Thyroid gland (tissue), 4 donors: ENCODE measurements at regions of chr12 and their contacts with region 1.

Region 1: DNA sequence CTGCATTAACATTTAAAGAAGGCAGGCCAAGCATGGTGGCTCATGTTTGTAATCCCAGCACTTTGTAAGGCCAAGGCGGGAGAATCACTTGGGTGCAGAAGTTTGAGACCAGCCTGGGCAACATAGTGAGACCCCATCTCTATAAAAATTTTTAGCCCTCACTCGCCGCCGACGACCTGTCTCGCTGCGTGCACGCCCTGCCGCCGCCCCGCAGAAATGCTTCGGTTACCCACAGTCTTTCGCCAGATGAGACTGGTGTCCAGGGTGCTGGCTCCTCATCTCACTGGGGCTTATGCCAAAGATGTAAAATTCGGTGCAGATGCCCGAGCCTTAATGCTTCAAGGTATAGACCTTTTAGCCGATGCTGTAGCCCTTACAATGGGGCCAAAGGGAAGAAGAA is 10.8 kb upstream of the RBMS2 start:
- DNase-seq: no peak
- H3K4me3 ChIP-seq: no peak overlapping the region
- H3K27ac ChIP-seq: no peak overlapping the region
- H3K4me1 ChIP-seq: peaks cover 5 to 6% of the 10 kb centered on the region in 2 donors
- H3K27me3 ChIP-seq: no peaks in the 10 kb centered on the region
- CTCF ChIP-seq: no peak
- POLR2A ChIP-seq: no peak

Region 2: GRCh38 chr12:56571126-56571525 is 60.3 kb after region 1 on chr12:
- intact Hi-C with region 1: loop called (anchors 5 kb)
- DNase-seq: no peak
- H3K4me3 ChIP-seq: no peak overlapping the region
- H3K27ac ChIP-seq: peak overlapping the region in 1 of 3 donors; percentile 19
- H3K4me1 ChIP-seq: peaks cover 4 to 9% of the 10 kb centered on the region in 2 donors
- H3K27me3 ChIP-seq: no peaks in the 10 kb centered on the region
- CTCF ChIP-seq: no peak
- POLR2A ChIP-seq: no peak